ENCODE measurements at regions of chr2 and their contacts with region 1.

Region 1: DNA sequence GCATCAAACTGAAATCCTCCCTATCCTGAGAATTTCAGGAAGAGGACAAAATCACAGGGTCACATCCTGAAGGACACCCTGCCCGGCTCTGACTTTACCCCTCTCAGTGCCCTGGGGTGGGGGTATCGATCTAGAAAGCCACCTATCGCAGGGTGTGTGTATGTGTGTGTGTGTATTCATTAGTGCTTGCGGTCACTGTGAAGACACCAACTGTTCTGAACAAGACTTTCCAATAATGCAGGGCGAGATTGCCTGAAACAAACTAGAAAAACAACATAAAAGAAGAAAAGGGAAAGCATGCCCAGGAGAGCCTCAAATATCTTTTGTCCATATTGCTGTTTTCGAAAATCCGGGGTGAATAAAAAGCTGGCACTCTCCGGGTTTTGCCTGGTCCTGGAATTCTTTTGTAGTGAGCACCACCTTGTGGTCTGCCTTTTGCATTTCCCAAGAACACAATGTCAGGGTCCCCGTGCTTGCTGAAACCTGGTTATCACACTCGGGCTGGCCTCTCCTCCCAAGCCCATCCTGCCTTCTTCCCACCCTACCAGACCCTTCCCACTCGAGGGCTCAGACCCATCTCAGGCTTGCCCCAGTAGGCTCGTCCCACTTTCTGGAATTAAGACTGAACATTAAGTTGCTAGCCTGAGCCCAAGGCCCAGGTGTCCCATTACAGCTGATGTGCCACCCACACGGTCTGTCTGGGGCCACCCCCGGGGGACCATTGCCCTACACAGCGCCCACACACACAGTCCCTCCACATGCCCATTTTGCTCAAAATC is 25.0 kb upstream of the COPS8 start:
- DNase-seq: no peak
- H3K4me3 ChIP-seq: no peak overlapping the region
- H3K27ac ChIP-seq: peak overlapping the region in 1 of 8 donors; percentile 60
- H3K4me1 ChIP-seq: peaks cover 0 to 38% (median 23%) of the 10 kb centered on the region in 6 donors
- H3K27me3 ChIP-seq: peaks cover 0 to 12% (median 0%) of the 10 kb centered on the region in 7 donors
- CTCF ChIP-seq: peak; percentile 40 to 74 (median 63)
- POLR2A ChIP-seq: no peak

Region 2: DNA sequence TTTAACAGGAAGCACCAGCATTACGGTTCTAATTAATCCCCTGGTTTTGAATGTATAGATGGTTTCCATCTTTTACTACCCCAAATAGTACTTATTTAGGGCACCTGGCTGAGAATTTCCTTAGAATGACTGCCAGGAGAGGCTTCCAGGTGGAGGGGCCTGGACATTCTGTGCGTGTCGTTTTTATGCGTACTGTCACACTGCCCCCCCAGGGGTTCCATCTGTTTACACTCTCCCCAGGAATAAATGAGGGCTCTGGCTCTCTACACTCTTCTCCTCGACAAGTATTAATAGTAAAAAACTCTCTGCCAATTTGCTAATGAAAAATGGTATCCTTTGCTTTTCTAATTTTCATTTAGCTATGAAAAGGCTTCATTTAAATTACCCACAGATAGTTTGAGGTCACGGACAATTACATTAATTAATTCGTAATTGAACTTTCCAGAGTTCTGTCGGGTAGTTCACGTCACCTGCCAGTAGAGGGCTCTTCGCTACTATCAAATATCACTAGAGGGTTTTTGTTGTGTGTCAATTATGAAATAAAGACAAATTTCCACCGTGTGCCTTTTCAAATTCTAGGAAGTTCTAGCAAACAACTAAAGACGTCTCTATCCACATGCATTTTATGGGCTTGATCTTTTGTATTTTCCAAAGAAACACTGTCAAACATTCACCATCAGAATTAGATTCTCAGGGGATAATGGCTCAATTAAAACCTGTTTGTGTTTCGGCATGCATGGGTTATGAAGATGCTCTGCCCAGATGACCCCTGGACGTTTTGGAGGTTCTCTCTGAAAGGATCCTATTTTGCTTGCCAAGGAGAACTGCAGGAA is 707.7 kb before region 1 on chr2:
- intact Hi-C with region 1: loop called (anchors 5 kb)
- DNase-seq: no peak
- H3K4me3 ChIP-seq: no peak overlapping the region
- H3K27ac ChIP-seq: no peak overlapping the region
- H3K4me1 ChIP-seq: peaks cover 0 to 9% (median 7%) of the 10 kb centered on the region in 6 donors
- H3K27me3 ChIP-seq: peaks cover 0 to 34% (median 0%) of the 10 kb centered on the region in 7 donors
- CTCF ChIP-seq: peak; percentile 56 to 84 (median 77)
- POLR2A ChIP-seq: no peak